ENCODE measurements at regions of chr9 and their contacts with region 1.

Region 1: DNA sequence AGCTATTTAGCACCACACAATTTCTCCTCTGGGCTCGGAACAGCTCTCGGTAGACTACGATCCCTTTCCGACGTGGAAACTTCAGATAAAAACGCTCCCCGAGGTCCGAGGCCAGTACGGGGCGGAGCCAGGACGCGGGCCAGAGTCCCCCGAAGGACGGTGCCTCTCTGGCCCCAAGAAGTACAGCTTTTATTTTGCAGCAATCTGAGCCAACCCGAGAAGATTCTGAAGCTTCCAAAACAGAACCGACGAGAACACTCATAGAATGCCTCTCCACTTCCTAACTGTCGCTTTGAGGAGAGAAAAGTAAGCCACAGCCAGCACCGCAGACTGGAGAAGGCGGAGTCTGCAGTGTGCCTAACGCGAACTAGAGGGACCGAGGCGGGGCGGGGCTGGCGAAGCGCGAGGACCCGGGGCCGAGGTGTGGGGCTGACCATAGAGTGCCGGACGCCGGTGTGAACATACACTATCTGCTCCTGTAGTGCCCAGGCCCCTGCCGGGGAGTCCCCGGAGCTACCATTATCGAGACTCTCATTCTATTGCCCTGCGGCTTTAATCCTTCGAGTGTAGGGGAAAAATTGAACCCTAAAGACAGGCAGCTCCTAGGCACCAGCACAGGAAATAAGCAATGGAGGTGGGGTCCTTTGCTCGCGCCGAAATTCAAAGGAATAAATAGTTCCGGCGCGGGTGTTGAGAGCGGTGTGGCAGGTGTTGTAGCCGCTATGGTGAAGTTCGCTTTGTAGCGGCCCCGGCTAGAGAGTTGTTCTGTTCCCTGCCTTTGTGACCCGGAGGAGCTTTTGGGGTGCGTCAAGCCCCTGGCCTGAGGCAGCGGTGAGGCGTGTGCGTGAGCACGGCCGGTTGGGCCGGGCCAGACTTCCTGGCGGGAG is at the start of gene SMC2:
- DNase-seq: peak; percentile 97
- ATAC-seq: peak; percentile 97
- total RNA-seq, gene SMC2: 8.4 TPM

Region 2: GRCh38 chr9:104027295-104027694 is 66.6 kb before region 1 on chr9:
- intact Hi-C with region 1: loop called (anchors 5 kb)
- DNase-seq: no peak
- ATAC-seq: no peak

Measured in Right ventricle myocardium superior (tissue), 1 donor.